ENCODE measurements at regions of chr5 and their contacts with region 1.

Region 1: GRCh38 chr5:169583424-169584204 is at the start of gene SPDL1:
- DNase-seq: peak; percentile 97
- H3K4me3 Mint-ChIP-seq: peak within 1 kb of the TSS; percentile 96
- H3K27ac Mint-ChIP-seq: peak within 1 kb of the TSS; percentile 94
- H3K4me1 Mint-ChIP-seq: peaks cover 28% of the 10 kb centered on the region
- H3K27me3 Mint-ChIP-seq: no peaks in the 10 kb centered on the region
- total RNA-seq, gene SPDL1: 26.5 to 29.9 TPM

Region 2: GRCh38 chr5:168579488-168580226 is 1004.0 kb before region 1 on chr5:
- CTCF ChIA-PET with region 1: no interaction called
- intact Hi-C with region 1: loop called (anchors 1 kb)
- DNase-seq: peak; percentile 98
- H3K4me3 Mint-ChIP-seq: peak overlapping the region; percentile 84
- H3K27ac Mint-ChIP-seq: peak overlapping the region; percentile 97
- H3K4me1 Mint-ChIP-seq: peaks cover 31% of the 10 kb centered on the region
- H3K27me3 Mint-ChIP-seq: no peaks in the 10 kb centered on the region

Region 3: GRCh38 chr5:168947212-168947868 is 636.3 kb before region 1 on chr5:
- CTCF ChIA-PET with region 1: interaction called, 3 read pairs
- intact Hi-C with region 1: loop called (anchors 1 kb)
- DNase-seq: peak; percentile 62
- H3K4me3 Mint-ChIP-seq: no peak overlapping the region
- H3K27ac Mint-ChIP-seq: no peak overlapping the region
- H3K4me1 Mint-ChIP-seq: no peaks in the 10 kb centered on the region
- H3K27me3 Mint-ChIP-seq: no peaks in the 10 kb centered on the region

Region 4: DNA sequence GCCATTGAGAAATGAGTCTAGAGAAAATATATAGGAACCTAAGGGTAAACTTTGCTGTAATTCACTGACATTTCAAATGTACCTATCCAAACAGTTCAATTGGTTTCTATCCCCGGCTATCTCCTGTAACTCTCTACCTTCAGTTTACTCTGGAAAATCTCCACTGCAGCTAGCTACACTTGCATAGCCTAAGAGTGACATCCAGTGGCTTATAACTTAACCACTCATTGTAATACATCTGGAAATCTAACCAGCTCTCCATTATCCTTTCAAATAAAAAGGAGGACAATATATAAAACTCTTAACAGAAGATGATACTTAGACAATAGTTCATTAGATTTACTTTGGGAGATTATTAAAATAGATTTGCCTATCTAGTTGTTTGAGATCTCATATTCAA is 35.3 kb before region 1 on chr5:
- CTCF ChIA-PET with region 1: interaction called, 3 read pairs
- intact Hi-C with region 1: loop called (anchors 1 kb)
- DNase-seq: no peak
- H3K4me3 Mint-ChIP-seq: no peak overlapping the region
- H3K27ac Mint-ChIP-seq: no peak overlapping the region
- H3K4me1 Mint-ChIP-seq: peaks cover 9% of the 10 kb centered on the region
- H3K27me3 Mint-ChIP-seq: peaks cover 59% of the 10 kb centered on the region

Region 5: DNA sequence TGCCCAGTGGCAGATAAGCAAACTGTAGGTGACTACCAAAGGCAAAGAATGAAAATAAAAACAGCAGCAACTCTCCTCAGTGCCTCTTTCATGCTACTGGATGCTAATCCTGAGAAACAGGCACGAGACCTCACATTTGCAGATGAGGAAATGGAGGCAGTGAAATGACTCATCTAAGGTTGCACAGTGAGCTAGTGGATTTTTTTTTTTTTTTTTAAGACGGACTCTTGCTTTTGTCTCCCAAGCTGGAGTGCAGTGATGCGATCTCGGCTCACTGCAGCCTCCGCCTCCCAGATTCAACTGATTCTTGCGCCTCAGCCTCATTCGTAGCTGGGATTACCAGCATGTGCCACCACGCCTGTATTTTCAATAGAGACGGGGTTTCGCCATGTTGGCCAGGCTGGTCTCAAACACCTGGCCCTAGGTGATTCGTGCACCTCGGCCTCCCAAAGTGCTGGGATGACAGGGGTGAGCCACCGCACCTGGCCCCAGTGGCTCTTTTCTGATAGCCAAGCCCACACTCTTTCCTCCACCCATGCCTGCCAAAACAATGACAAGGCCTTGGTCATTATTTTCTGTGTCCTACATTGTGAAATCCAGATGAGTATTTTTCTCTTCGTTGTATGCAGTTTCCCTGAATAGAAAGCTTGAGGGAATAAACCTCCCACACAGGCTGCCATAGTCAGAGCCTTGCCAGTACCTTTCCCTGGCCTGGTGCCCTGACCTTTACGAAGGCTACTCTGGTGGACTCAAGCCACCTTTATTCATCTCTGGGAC is 72.7 kb after region 1 on chr5:
- CTCF ChIA-PET with region 1: no interaction called
- intact Hi-C with region 1: loop called (anchors 1 kb)
- DNase-seq: peak; percentile 61
- H3K4me3 Mint-ChIP-seq: peak overlapping the region; percentile 29
- H3K27ac Mint-ChIP-seq: peak overlapping the region; percentile 77
- H3K4me1 Mint-ChIP-seq: peaks cover 61% of the 10 kb centered on the region
- H3K27me3 Mint-ChIP-seq: no peaks in the 10 kb centered on the region

Region 6: DNA sequence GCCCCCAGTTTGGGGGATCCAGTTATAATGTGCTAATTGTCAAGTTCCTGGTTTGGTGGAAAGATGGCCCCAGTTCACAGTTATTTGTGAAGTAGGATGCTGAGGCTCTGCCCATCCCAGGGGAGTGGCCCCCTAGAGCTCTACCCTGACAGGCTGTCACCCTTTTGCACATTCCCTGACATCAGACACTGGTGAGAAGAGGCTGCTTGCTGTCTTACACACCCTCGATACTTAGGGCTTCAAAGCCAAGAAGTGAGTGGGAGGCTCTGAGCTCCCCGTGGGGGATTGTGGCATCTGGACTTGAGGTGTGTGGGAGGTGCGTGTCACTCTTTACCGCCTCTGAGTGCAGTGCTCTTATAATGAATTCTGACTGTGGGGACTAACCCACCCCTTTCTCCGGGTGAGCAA is 221.9 kb after region 1 on chr5:
- CTCF ChIA-PET with region 1: interaction called, 3 read pairs
- intact Hi-C with region 1: loop called (anchors 1 kb)
- DNase-seq: peak; percentile 81
- H3K4me3 Mint-ChIP-seq: peak overlapping the region; percentile 1
- H3K27ac Mint-ChIP-seq: peak overlapping the region; percentile 92
- H3K4me1 Mint-ChIP-seq: peaks cover 38% of the 10 kb centered on the region
- H3K27me3 Mint-ChIP-seq: no peaks in the 10 kb centered on the region

Region 7: DNA sequence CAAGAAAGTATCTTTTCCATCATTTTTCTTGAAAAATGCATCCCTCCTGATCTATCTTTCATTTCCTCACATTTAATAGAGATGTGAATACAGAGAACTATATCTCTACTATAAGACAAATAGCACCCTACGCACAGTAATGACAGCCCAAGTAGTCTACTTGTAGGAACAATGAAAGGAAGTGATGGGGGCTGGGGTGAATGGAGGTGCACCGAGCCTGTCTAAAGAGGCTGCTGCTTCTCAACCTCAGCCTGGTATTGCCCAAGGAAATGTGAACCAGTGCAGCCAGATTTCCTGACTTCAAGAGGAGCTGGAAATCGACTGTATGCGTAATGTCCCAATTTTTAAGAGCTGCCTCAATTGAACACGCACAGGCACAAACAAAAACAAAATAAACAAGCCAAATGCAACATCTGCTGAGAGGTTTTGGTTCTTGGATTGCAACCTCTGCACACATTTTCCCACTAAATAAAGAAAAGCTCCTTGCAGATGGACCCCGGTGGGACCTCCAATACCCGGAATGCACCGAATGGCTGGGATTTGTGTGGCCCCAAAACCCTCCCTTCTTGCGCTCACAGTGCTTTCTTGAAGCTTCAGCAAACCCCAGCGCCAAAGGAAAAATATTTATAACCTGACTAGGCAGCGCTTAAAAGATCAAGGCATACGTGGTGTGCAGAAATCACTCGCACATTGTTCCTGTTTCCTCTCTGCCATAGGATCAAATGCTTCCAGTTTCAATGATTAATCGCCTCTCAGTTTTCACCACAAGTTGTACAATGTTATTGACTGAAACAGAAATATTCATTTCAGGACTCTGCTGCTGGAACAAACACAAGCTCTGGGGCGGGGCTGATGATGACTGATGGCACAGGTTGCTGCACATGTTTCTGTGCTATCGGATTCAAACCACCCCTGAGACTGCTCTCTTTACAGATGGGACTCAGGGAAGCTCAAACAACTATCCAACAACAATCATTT is 988.5 kb after region 1 on chr5:
- CTCF ChIA-PET with region 1: no interaction called
- intact Hi-C with region 1: loop called (anchors 10 kb)
- DNase-seq: peak; percentile 94
- H3K4me3 Mint-ChIP-seq: no peak overlapping the region
- H3K27ac Mint-ChIP-seq: no peak overlapping the region
- H3K4me1 Mint-ChIP-seq: peaks cover 20% of the 10 kb centered on the region
- H3K27me3 Mint-ChIP-seq: peaks cover 63% of the 10 kb centered on the region